Activated CD4-positive, alpha-beta T cell treated with anti-CD3 and anti-CD28 coated beads, Interleukin-2, amount 10 ng/mL, durations not matched to agents 24 days and 14 days (primary cell): ENCODE measurements at regions of chr11 and their contacts with region 1.

Region 1: DNA sequence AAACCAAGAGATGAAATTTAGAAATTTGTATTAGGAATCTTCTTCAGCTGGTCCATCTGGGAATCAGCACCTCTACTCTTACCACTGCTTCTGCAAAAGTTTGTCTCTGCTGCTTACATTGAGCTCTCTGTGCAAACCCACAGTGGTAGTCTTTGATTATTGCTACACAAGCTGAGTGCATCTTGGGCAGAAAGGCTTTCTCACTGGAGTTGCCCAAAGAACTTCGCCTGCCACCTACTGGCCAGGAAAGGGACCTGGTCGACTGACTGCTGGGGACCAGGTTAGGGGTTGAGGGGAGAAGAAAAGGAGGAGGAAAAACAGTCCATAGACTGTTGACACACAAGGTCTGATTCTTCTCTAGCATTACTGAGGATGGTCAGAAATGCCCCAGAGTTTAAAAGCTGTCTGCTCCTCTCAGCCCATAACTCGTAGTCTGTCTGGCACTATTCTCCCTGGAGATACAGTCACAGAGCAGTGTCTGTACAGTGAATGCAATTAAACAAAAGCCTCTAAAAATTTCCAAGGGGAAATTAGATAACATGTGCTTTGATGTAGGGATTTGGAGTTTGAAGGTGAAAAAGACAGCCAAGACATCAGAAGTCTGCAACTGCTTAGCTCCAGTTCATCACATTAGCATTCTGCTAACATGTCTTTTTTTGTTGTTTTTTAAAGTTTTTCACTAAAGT is 215.0 kb upstream of the CTSC start:
- DNase-seq: peak; percentile 87
- H3K4me3 Mint-ChIP-seq: no peak overlapping the region
- H3K27ac Mint-ChIP-seq: no peak overlapping the region
- H3K4me1 Mint-ChIP-seq: peaks cover 3% of the 10 kb centered on the region
- H3K27me3 Mint-ChIP-seq: peaks cover 9% of the 10 kb centered on the region

Region 2: GRCh38 chr11:87878373-87878779 is 674.1 kb before region 1 on chr11:
- intact Hi-C with region 1: loop called (anchors 10 kb)
- DNase-seq: no peak
- H3K4me3 Mint-ChIP-seq: no peak overlapping the region
- H3K27ac Mint-ChIP-seq: no peak overlapping the region
- H3K4me1 Mint-ChIP-seq: no peaks in the 10 kb centered on the region
- H3K27me3 Mint-ChIP-seq: no peaks in the 10 kb centered on the region

Region 3: DNA sequence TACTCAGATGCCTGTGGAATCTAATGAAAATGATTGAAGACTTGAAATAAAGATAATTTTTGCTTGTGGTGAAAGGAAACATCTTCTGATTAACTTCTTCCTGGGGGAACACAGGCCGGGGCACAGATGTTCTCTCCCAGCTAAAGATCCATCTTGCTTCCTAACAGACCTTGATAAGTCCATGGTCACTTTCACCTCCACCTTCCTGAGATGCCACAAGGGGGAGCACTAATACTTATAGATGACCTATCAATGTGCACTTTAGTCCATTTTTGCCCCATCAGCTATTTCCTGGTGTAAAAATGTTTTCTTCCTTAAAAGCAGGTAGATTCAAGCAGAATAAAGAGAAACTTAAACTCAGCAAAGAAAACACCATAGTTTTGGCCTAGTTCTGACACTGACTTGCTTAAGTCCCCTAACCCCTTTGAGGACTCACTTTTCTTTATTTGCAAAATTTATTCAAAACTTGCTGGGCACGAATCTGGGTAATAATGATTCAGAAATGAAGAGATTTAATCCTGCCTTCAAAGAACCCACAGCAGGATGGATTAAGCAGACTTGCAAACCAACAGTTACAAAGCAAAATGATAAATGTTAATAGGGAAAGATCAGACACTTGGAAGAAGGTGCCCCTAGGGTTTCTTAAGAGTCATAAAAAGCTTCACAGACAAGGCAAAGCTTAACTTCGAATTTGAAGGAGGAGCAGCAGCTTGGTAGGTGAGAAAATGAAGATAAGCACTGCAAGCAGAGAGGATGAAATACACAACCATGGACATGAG is 535.9 kb before region 1 on chr11:
- intact Hi-C with region 1: loop called (anchors 1 kb)
- DNase-seq: peak; percentile 85
- H3K4me3 Mint-ChIP-seq: no peak overlapping the region
- H3K27ac Mint-ChIP-seq: no peak overlapping the region
- H3K4me1 Mint-ChIP-seq: no peaks in the 10 kb centered on the region
- H3K27me3 Mint-ChIP-seq: no peaks in the 10 kb centered on the region